Mammary epithelial cell (primary cell): ENCODE measurements at regions of chr4 and their contacts with region 1.

Region 1: GRCh38 chr4:39922389-39922788 is 55.3 kb downstream of the PDS5A start:
- DNase-seq: no peak
- H3K4me3 ChIP-seq: no peak overlapping the region
- H3K27ac ChIP-seq: no peak overlapping the region
- H3K4me1 ChIP-seq: no peaks in the 10 kb centered on the region
- H3K27me3 ChIP-seq: no peaks in the 10 kb centered on the region
- CTCF ChIP-seq: no peak

Region 2: GRCh38 chr4:40020221-40020943 is 98.0 kb after region 1 on chr4:
- CTCF ChIA-PET with region 1: no interaction called
- dilution Hi-C with region 1: loop called (anchors 5 kb)
- in situ Hi-C with region 1: no loop called
- intact Hi-C with region 1: no loop called
- DNase-seq: no peak
- H3K4me3 ChIP-seq: no peak overlapping the region
- H3K27ac ChIP-seq: no peak overlapping the region
- H3K4me1 ChIP-seq: no peaks in the 10 kb centered on the region
- H3K27me3 ChIP-seq: no peaks in the 10 kb centered on the region
- CTCF ChIP-seq: no peak